Ascending aorta (tissue), 2 donors: ENCODE measurements at regions of chr16 and their contacts with region 1.

Region 1: GRCh38 chr16:77722309-77723107 is at the start of gene NUDT7:
- DNase-seq: peak; percentile 89 to 99
- H3K4me3 ChIP-seq: peak within 1 kb of the TSS; percentile 64 to 67
- H3K27ac ChIP-seq: peak within 1 kb of the TSS; percentile 75 to 83
- H3K4me1 ChIP-seq: no peaks in the 10 kb centered on the region
- H3K27me3 ChIP-seq: no peaks in the 10 kb centered on the region
- CTCF ChIP-seq: peak; percentile 11 to 38 (median 26)
- total RNA-seq, gene NUDT7: not detected

Region 2: DNA sequence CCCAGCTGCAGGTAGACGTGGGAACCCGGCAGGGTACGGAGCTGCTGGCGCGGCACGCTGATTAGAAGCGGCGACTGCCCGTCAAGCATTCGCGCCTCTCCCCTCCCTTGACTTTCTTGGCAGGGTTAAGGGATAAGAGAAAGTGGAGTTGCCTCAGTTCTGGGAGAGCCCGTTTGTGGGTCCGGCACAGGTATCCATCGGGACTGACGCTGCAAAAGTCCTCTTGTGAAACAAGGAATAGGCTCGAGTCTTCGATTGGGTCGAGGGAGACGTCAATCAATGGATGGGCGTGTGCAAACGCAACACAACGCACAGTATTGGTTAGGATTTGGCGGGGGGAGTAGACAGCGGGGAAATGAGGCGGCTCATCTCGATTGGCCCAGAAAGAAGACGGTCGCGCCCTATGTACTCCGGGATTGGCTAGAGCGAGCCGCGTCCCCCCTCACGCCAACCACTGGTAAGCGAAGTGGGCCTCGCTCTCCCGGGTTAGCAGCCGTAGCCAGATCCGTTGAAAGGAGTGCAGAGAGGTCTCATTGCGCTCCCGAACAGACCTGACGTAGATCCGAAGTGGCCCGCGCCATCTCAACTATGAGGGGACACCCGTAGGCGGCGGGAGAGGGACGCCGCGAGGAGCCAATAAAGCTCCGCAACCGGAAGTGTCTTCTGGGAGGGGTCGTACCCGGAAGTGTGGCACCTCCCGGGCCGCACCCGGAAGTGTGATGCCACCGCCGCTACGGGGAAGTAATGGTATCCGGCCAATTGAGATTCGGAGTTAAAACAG is 531.8 kb before region 1 on chr16 and contains the start of gene MON1B:
- intact Hi-C with region 1: loop called (anchors 1 kb)
- DNase-seq: peak; percentile 96 to 99
- H3K4me3 ChIP-seq: peak within 1 kb of the TSS; percentile 63 to 72
- H3K27ac ChIP-seq: peak within 1 kb of the TSS; percentile 93 to 95
- H3K4me1 ChIP-seq: peaks cover 0 to 11% of the 10 kb centered on the region in 2 donors
- H3K27me3 ChIP-seq: no peaks in the 10 kb centered on the region
- CTCF ChIP-seq: peak in 2 of 3 experiments; percentile 11 to 21
- total RNA-seq, gene MON1B: 31.9 TPM

Region 3: DNA sequence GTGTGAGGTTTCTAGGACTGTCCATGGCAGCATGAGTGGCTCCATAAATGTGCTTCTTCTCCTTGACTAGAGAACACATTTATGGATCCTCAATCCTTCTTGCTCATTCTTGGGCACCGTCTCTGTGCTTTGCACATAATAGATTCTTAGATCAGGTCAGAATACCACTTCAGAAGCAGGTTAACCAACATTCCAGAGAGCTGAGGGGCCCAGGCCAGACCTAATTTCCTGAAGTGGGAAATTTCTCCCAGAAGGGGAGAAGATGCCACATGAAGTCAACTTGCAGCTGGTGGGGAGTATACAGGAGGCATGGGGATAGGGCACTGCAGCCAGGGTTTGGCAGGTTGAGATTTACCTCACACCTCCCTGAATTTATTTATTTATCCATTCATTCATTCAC is 41.5 kb after region 1 on chr16:
- intact Hi-C with region 1: loop called (anchors 2 kb)
- DNase-seq: no peak
- H3K4me3 ChIP-seq: no peak overlapping the region
- H3K27ac ChIP-seq: peak overlapping the region; percentile 71 to 74
- H3K4me1 ChIP-seq: peaks cover 3 to 6% of the 10 kb centered on the region in 2 donors
- H3K27me3 ChIP-seq: no peaks in the 10 kb centered on the region
- CTCF ChIP-seq: no peak

Region 4: GRCh38 chr16:77881355-77882030 is 159.0 kb after region 1 on chr16:
- intact Hi-C with region 1: loop called (anchors 5 kb)
- DNase-seq: no peak
- H3K4me3 ChIP-seq: no peak overlapping the region
- H3K27ac ChIP-seq: peak overlapping the region; percentile 66 to 71
- H3K4me1 ChIP-seq: peaks cover 10 to 32% of the 10 kb centered on the region in 2 donors
- H3K27me3 ChIP-seq: no peaks in the 10 kb centered on the region
- CTCF ChIP-seq: no peak

Region 5: DNA sequence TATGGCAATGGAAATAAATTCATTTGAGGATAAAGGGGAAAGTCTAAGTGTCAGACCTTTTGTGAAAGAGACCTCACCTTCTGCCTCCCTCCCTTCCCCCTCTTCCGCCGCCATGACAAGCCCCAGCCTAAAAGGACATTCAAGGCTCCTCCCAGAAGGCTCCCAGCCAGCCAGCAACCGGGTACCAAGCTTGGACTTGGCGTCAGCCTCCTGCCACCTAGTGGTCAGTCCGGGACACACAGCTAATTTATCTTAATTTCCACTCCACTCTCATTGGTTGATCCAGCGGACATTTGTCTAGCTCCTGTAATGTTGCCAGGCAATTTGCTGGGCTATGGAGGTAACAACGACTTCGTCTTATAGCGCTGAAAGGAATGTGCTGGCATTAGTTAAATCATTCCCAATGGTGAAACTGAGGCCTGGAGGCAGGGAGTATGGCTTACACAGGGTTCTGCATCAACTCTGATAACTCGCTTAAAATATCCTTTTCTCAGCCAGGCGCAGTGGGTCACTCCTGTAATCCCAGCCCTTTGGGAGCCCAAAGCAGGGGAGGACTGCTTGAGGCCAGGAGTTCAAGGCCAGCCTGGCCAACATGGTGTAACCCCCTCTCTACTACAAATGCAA is 280.5 kb after region 1 on chr16:
- intact Hi-C with region 1: loop called (anchors 2 kb)
- DNase-seq: peak; percentile 32 to 94
- H3K4me3 ChIP-seq: no peak overlapping the region
- H3K27ac ChIP-seq: no peak overlapping the region
- H3K4me1 ChIP-seq: no peaks in the 10 kb centered on the region
- H3K27me3 ChIP-seq: no peaks in the 10 kb centered on the region
- CTCF ChIP-seq: peak; percentile 87 to 90 (median 88)